Breast epithelium (tissue), 4 donors: ENCODE measurements at regions of chr3 and their contacts with region 1.

Region 1: GRCh38 chr3:46027736-46028397 is 584 bp upstream of the XCR1 start:
- DNase-seq: no peak
- H3K4me3 ChIP-seq: no peak overlapping the region
- H3K27ac ChIP-seq: no peak overlapping the region
- H3K4me1 ChIP-seq: no peaks in the 10 kb centered on the region
- H3K27me3 ChIP-seq: no peaks in the 10 kb centered on the region
- CTCF ChIP-seq: no peak
- POLR2A ChIP-seq: no peak

Region 2: GRCh38 chr3:45188719-45189659 is 838.9 kb before region 1 on chr3:
- intact Hi-C with region 1: no loop called
- DNase-seq: no peak
- H3K4me3 ChIP-seq: no peak overlapping the region
- H3K27ac ChIP-seq: no peak overlapping the region
- H3K4me1 ChIP-seq: no peaks in the 10 kb centered on the region
- H3K27me3 ChIP-seq: no peaks in the 10 kb centered on the region
- CTCF ChIP-seq: no peak
- POLR2A ChIP-seq: no peak

Region 3: GRCh38 chr3:45795882-45796765 is 231.7 kb before region 1 on chr3 and contains the start of gene SLC6A20:
- intact Hi-C with region 1: no loop called
- DNase-seq: no peak
- H3K4me3 ChIP-seq: peak within 1 kb of the TSS; percentile 36 to 70 (median 56)
- H3K27ac ChIP-seq: no peak within 1 kb of the TSS
- H3K4me1 ChIP-seq: no peaks in the 10 kb centered on the region
- H3K27me3 ChIP-seq: peaks cover 3 to 16% of the 10 kb centered on the region in 2 donors
- CTCF ChIP-seq: no peak
- POLR2A ChIP-seq: no peak
- total RNA-seq, gene SLC6A20: 0.16 to 1.2 (median 0.33) TPM

Region 4: GRCh38 chr3:46056668-46057067 is 28.8 kb after region 1 on chr3:
- intact Hi-C with region 1: loop called (anchors 2 kb)
- DNase-seq: no peak
- H3K4me3 ChIP-seq: no peak overlapping the region
- H3K27ac ChIP-seq: no peak overlapping the region
- H3K4me1 ChIP-seq: no peaks in the 10 kb centered on the region
- H3K27me3 ChIP-seq: no peaks in the 10 kb centered on the region
- CTCF ChIP-seq: no peak
- POLR2A ChIP-seq: no peak

Region 5: GRCh38 chr3:46163318-46164041 is 135.6 kb after region 1 on chr3:
- intact Hi-C with region 1: no loop called
- DNase-seq: no peak
- H3K4me3 ChIP-seq: no peak overlapping the region
- H3K27ac ChIP-seq: peak overlapping the region; percentile 33 to 66
- H3K4me1 ChIP-seq: no peaks in the 10 kb centered on the region
- H3K27me3 ChIP-seq: no peaks in the 10 kb centered on the region
- CTCF ChIP-seq: no peak
- POLR2A ChIP-seq: no peak